Activated T-helper 1 cell treated with anti-CD3 and anti-CD28 coated beads, Interleukin-12 subunit alpha, Interleukin-12 subunit beta, Interleukin-2, Interleukin-4 antibody, amounts not matched to agents 30 ng/mL and 10 ng/mL and 1 ng/mL, durations not matched to agents 14 hours and 24 hours and 36 hours (primary cell): ENCODE measurements at regions of chr10 and their contacts with region 1.

Region 1: GRCh38 chr10:79331709-79332108 is 15.6 kb upstream of the PPIF start:
- DNase-seq: peak; percentile 87
- H3K4me3 Mint-ChIP-seq: peak overlapping the region; percentile 40
- H3K27ac Mint-ChIP-seq: peak overlapping the region; percentile 94
- H3K4me1 Mint-ChIP-seq: peaks cover 58% of the 10 kb centered on the region
- H3K27me3 Mint-ChIP-seq: no peaks in the 10 kb centered on the region

Region 2: DNA sequence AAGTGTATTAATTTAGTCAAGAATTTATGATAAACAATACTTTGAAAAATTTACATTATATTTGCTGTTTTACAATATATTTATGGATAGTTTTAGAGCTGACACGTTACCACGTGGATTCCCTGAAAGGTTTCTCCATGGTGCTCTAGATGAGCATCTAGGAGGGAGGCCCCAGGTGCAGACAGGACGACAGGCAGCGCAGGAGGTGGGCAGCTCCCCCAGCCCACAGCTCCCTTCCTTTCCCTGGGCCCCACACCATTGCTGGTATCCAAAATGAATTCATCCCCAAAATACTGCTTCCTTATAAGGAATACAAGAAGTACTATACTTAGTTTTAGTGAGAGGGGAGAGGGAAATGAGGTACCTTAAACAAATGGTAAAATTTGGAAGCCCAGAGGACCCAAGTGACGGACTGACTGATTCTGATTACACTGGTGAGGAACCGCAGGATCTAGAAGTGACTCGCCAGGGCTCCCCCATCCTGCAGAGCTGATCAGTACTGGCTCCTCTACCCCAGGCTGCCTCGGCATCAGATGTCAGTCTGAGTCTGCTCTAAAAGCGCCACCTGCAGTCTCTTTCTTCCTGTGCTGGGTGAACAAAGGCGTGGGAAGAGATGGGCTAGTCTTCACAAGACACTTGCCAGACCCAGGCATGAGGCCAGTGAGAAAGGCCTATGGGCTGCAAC is 1494.3 kb before region 1 on chr10:
- intact Hi-C with region 1: loop called (anchors 5 kb)
- DNase-seq: peak; percentile 67
- H3K4me3 Mint-ChIP-seq: peak overlapping the region; percentile 19
- H3K27ac Mint-ChIP-seq: peak overlapping the region; percentile 52
- H3K4me1 Mint-ChIP-seq: peaks cover 29% of the 10 kb centered on the region
- H3K27me3 Mint-ChIP-seq: no peaks in the 10 kb centered on the region

Region 3: DNA sequence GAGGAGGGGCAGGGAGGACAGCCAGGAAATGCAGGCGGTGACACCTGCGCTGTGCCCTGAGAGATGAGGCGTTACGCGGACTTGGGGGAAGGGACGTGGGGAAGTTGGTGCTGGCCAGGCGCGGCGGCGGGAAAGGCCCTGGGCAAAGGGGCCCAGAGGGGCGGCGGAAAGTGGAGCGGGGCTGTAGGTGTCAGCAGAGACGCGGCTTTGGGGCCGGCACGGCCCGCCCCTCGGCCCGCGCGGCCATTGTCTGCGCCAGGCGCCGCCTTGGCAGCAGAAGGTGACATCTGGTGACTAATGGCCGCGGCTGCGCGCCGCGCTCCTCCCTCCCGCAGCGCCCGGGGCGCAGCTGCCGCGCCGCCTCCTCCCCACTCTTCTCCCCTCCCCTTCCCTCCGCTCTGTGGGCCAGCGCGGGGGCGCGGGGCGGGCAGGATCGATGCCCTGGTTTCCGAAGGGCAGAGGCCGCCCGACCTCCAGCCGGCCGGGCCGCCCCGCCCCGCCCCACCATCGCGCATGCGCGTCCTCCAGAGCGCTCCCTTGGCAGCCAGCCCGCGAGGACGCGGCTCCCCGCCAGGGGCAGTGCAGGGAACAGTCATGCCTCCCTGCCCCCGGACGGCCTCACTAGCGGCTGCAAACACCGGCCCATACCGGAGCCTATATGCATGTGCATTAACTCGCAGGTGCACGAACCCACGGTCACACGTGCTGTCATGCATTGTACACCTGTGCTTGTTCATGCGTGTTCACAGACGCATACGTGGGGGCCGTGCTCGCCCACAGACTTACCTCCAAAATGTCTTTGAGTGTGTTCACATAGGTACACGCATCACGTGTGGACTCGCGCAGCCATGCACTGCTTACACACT is 1028.5 kb before region 1 on chr10:
- intact Hi-C with region 1: loop called (anchors 1 kb)
- DNase-seq: peak; percentile 91
- H3K4me3 Mint-ChIP-seq: peak overlapping the region; percentile 87
- H3K27ac Mint-ChIP-seq: peak overlapping the region; percentile 91
- H3K4me1 Mint-ChIP-seq: peaks cover 15% of the 10 kb centered on the region
- H3K27me3 Mint-ChIP-seq: peaks cover 16% of the 10 kb centered on the region

Region 4: DNA sequence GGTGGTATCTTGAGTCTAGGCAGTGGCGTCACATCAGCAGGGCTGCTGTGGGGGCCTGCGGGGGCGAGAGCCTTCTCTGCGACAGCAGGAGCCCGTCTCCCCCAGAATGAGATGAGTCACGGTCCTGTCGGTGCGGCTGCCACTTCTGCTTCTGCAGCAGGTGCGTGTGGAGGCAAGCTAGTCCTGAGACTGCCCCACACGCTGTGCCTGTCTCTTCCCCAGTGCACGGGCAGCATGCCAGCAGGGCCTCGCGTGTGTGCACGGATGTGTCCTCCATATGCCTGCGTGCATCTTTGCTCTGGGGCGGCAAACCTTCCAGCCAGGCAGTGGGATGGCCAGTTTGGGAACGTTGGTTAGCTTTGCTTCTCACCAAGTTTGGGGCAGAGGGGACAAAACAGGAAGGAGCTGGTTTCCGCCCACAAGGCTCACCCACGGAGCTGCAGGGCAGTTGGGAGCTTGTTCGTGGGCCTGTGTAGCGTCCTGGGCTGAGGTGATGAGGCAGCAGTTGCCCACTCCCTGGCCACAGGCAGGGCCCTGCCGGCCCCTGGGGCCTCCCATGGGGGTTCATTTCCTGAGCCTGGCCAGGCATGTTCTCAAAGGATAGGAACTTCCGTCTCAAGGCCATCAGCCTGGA is 45.3 kb before region 1 on chr10:
- intact Hi-C with region 1: loop called (anchors 1 kb)
- DNase-seq: peak; percentile 65
- H3K4me3 Mint-ChIP-seq: peak overlapping the region; percentile 71
- H3K27ac Mint-ChIP-seq: peak overlapping the region; percentile 89
- H3K4me1 Mint-ChIP-seq: peaks cover 61% of the 10 kb centered on the region
- H3K27me3 Mint-ChIP-seq: no peaks in the 10 kb centered on the region

Region 5: GRCh38 chr10:79347226-79347893 is 15.7 kb after region 1 on chr10 and contains the start of gene PPIF:
- intact Hi-C with region 1: loop called (anchors 1 kb)
- DNase-seq: peak; percentile 95
- H3K4me3 Mint-ChIP-seq: peak within 1 kb of the TSS; percentile 95
- H3K27ac Mint-ChIP-seq: peak within 1 kb of the TSS; percentile 93
- H3K4me1 Mint-ChIP-seq: peaks cover 69% of the 10 kb centered on the region
- H3K27me3 Mint-ChIP-seq: no peaks in the 10 kb centered on the region
- total RNA-seq, gene PPIF: 155 and 157 TPM in 2 replicates

Region 6: GRCh38 chr10:80078448-80079311 is 747.0 kb after region 1 on chr10 and contains the start of gene TMEM254:
- intact Hi-C with region 1: loop called (anchors 5 kb)
- DNase-seq: peak; percentile 85
- H3K4me3 Mint-ChIP-seq: peak within 1 kb of the TSS; percentile 98
- H3K27ac Mint-ChIP-seq: peak within 1 kb of the TSS; percentile 92
- H3K4me1 Mint-ChIP-seq: peaks cover 29% of the 10 kb centered on the region
- H3K27me3 Mint-ChIP-seq: no peaks in the 10 kb centered on the region
- total RNA-seq, gene TMEM254: 10.8 and 12.4 TPM in 2 replicates